Heart left ventricle (tissue), 16 donors: ENCODE measurements at regions of chr7 and their contacts with region 1.

Region 1: GRCh38 chr7:11969643-11970042 is 137.6 kb upstream of the THSD7A start:
- DNase-seq: no peak
- ATAC-seq: no peak
- H3K4me3 ChIP-seq: no peak overlapping the region
- H3K27ac ChIP-seq: no peak overlapping the region
- H3K4me1 ChIP-seq: no peaks in the 10 kb centered on the region
- H3K27me3 ChIP-seq: no peaks in the 10 kb centered on the region
- CTCF ChIP-seq: no peak
- POLR2A ChIP-seq: no peak

Region 2: GRCh38 chr7:12031638-12032037 is 62.0 kb after region 1 on chr7:
- intact Hi-C with region 1: loop called in 1 of 10 experiments (anchors 10 kb)
- DNase-seq: no peak
- ATAC-seq: no peak
- H3K4me3 ChIP-seq: no peak overlapping the region
- H3K27ac ChIP-seq: no peak overlapping the region
- H3K4me1 ChIP-seq: no peaks in the 10 kb centered on the region
- H3K27me3 ChIP-seq: no peaks in the 10 kb centered on the region
- CTCF ChIP-seq: no peak
- POLR2A ChIP-seq: no peak

Region 3: GRCh38 chr7:12418452-12418851 is 448.8 kb after region 1 on chr7:
- intact Hi-C with region 1: no loop called
- DNase-seq: no peak
- ATAC-seq: no peak
- H3K4me3 ChIP-seq: no peak overlapping the region
- H3K27ac ChIP-seq: no peak overlapping the region
- H3K4me1 ChIP-seq: no peaks in the 10 kb centered on the region
- H3K27me3 ChIP-seq: no peaks in the 10 kb centered on the region
- CTCF ChIP-seq: no peak
- POLR2A ChIP-seq: no peak